Heart right ventricle (tissue), 16 donors: ENCODE measurements at regions of chr2 and their contacts with region 1.

Region 1: GRCh38 chr2:111897924-111898702 is at the start of gene MERTK:
- DNase-seq: peak; percentile 90 to 91
- ATAC-seq: peak; percentile 91 to 96 (median 94)
- H3K4me3 ChIP-seq: peak within 1 kb of the TSS; percentile 61 to 97 (median 92)
- H3K27ac ChIP-seq: peak within 1 kb of the TSS; percentile 76 to 95 (median 88)
- H3K4me1 ChIP-seq: peaks cover 0 to 50% (median 34%) of the 10 kb centered on the region in 9 donors
- H3K27me3 ChIP-seq: peaks cover 0 to 14% (median 0%) of the 10 kb centered on the region in 7 donors
- CTCF ChIP-seq: peak; percentile 32 to 91 (median 64)
- total RNA-seq, gene MERTK: 2.3 to 8.9 (median 3.9) TPM

Region 2: GRCh38 chr2:111930875-111931274 is 32.8 kb after region 1 on chr2:
- intact Hi-C with region 1: no loop called
- DNase-seq: no peak
- ATAC-seq: no peak
- H3K4me3 ChIP-seq: no peak overlapping the region
- H3K27ac ChIP-seq: no peak overlapping the region
- H3K4me1 ChIP-seq: peaks cover 0 to 17% (median 6%) of the 10 kb centered on the region in 9 donors
- H3K27me3 ChIP-seq: no peaks in the 10 kb centered on the region
- CTCF ChIP-seq: no peak

Region 3: GRCh38 chr2:111946294-111947114 is 48.4 kb after region 1 on chr2:
- intact Hi-C with region 1: loop called in 2 of 10 experiments (anchors 5 to 10 kb)
- DNase-seq: peak in 1 of 2 donors; percentile 47
- ATAC-seq: peak; percentile 78 to 95 (median 90)
- H3K4me3 ChIP-seq: no peak overlapping the region
- H3K27ac ChIP-seq: peak overlapping the region in 9 of 10 donors; percentile 18 to 75 (median 46)
- H3K4me1 ChIP-seq: peaks cover 0 to 28% (median 17%) of the 10 kb centered on the region in 9 donors
- H3K27me3 ChIP-seq: no peaks in the 10 kb centered on the region
- CTCF ChIP-seq: no peak

Region 4: DNA sequence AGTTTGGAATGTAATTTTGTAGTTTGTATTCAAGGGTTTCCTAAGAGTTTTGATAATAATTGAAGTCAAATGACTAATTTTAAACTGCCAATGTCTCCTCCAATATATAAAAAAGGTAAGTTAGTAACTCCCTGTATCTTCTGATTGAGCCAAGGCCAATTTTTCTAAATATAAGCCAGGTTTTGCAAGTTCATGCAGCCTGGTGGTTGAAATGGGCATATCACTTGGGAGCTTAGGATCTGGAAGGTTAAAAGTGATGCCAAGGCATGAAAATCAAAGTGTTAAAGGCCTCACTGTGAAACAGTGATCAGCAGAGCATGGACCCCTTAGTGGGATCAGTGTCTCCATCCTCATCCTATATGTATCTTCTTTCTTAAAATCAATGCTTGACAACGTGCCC is 60.8 kb after region 1 on chr2:
- intact Hi-C with region 1: loop called in 1 of 10 experiments (anchors 10 kb)
- DNase-seq: no peak
- ATAC-seq: no peak
- H3K4me3 ChIP-seq: no peak overlapping the region
- H3K27ac ChIP-seq: peak overlapping the region in 4 of 10 donors; percentile 53 to 72 (median 60)
- H3K4me1 ChIP-seq: peaks cover 0 to 50% (median 22%) of the 10 kb centered on the region in 9 donors
- H3K27me3 ChIP-seq: no peaks in the 10 kb centered on the region
- CTCF ChIP-seq: peak in 2 of 9 donors; percentile 15 to 29

Region 5: GRCh38 chr2:111975053-111975552 is 77.0 kb after region 1 on chr2:
- intact Hi-C with region 1: loop called in 2 of 10 experiments (anchors 5 kb)
- DNase-seq: no peak
- ATAC-seq: peak in 2 of 8 donors; percentile 27 to 46
- H3K4me3 ChIP-seq: no peak overlapping the region
- H3K27ac ChIP-seq: peak overlapping the region in 1 of 10 donors; percentile 33
- H3K4me1 ChIP-seq: peaks cover 0 to 22% (median 17%) of the 10 kb centered on the region in 9 donors
- H3K27me3 ChIP-seq: no peaks in the 10 kb centered on the region
- CTCF ChIP-seq: no peak

Region 6: GRCh38 chr2:112048887-112049286 is 150.8 kb after region 1 on chr2:
- intact Hi-C with region 1: loop called in 8 of 10 experiments (anchors 2 to 5 kb)
- DNase-seq: peak in 1 of 2 donors; percentile 58
- ATAC-seq: peak in 6 of 8 donors; percentile 59 to 87 (median 83)
- H3K4me3 ChIP-seq: no peak overlapping the region
- H3K27ac ChIP-seq: no peak overlapping the region
- H3K4me1 ChIP-seq: peaks cover 0 to 29% (median 23%) of the 10 kb centered on the region in 9 donors
- H3K27me3 ChIP-seq: no peaks in the 10 kb centered on the region
- CTCF ChIP-seq: peak; percentile 67 to 91 (median 83)